ENCODE measurements at regions of chr5 and their contacts with region 1.

Region 1: GRCh38 chr5:174045470-174046025 is at the start of gene NSG2:
- DNase-seq: peak; percentile 56
- H3K4me3 ChIP-seq: no peak within 1 kb of the TSS
- H3K27ac ChIP-seq: no peak within 1 kb of the TSS
- H3K27me3 ChIP-seq: no peaks in the 10 kb centered on the region
- CTCF ChIP-seq: peak; percentile 62
- polyA plus RNA-seq, gene NSG2: not detected in 2 replicates

Region 2: GRCh38 chr5:174311531-174312269 is 266.2 kb after region 1 on chr5:
- CTCF ChIA-PET with region 1: interaction called, 56 read pairs
- POLR2A ChIA-PET with region 1: no interaction called
- DNase-seq: no peak
- H3K4me3 ChIP-seq: peak overlapping the region; percentile 47
- H3K27ac ChIP-seq: no peak overlapping the region
- H3K27me3 ChIP-seq: peaks cover 13% of the 10 kb centered on the region
- CTCF ChIP-seq: peak; percentile 75

Region 3: GRCh38 chr5:174317259-174317894 is 271.8 kb after region 1 on chr5:
- CTCF ChIA-PET with region 1: interaction called, 56 read pairs
- POLR2A ChIA-PET with region 1: no interaction called
- DNase-seq: no peak
- H3K4me3 ChIP-seq: no peak overlapping the region
- H3K27ac ChIP-seq: no peak overlapping the region
- H3K27me3 ChIP-seq: peaks cover 12% of the 10 kb centered on the region
- CTCF ChIP-seq: peak; percentile 95

Measured in AG04450 (cell line).